T-cell (primary cell): ENCODE measurements at regions of chr3 and their contacts with region 1.

Region 1: DNA sequence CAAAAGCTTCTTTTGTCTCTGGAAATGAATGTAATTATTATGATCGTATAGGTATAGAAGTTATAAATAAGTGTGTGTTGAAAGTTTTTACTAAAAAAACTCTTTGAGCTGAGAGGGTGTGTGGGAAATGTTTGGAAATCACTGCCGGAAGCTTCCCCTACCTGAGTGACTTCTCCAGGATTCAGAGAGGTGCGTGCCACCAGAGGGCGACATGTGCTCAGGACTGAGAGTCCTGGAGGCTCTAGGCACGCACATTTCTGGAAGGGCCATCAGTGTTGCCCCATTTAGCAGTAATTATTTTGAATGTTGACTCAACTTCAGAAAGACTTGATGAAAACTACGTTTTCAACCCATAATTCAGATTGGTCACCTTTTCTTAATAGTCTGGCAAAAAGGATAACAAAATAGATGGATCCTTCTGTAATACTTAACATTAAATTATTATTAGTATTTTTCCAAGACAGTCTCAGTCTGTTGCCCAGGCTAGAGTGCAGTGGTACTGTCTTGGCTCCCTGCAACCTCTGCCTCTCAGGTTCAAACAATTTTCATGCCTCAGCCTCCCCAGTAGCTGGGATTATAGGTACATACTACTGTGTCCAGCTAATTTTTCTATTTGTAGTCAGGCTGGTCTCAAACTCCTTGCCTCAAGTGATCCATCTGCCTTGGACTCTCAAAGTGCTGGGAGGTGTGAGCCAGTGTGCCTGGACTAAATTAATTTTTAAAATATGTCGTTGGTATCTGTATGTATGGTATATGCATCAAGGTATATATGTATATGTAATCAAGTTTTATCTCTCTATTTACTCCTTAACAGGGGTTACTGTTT is 34.5 kb downstream of the GPR171 start:
- DNase-seq: peak; percentile 41 to 88 (median 75)
- ATAC-seq: peak; percentile 63 to 70 (median 68)
- H3K4me3 ChIP-seq: no peak overlapping the region
- H3K4me3 Mint-ChIP-seq: no peak overlapping the region
- H3K27ac ChIP-seq: no peak overlapping the region
- H3K27ac Mint-ChIP-seq: no peak overlapping the region
- H3K4me1 ChIP-seq: peaks cover 33% of the 10 kb centered on the region in 2 experiments
- H3K4me1 Mint-ChIP-seq: peaks cover 40 to 42% (median 40%) of the 10 kb centered on the region in 3 donors
- H3K27me3 ChIP-seq: no peaks in the 10 kb centered on the region
- H3K27me3 Mint-ChIP-seq: no peaks in the 10 kb centered on the region

Region 2: GRCh38 chr3:151203051-151203420 is 34.6 kb after region 1 on chr3 and contains the start of gene GPR171:
- CTCF ChIA-PET with region 1: interaction called, 11 to 16 read pairs
- POLR2A ChIA-PET with region 1: interaction called in 1 of 2 experiments, 3 read pairs
- DNase-seq: peak in 34 of 35 experiments; percentile 41 to 85 (median 64)
- ATAC-seq: peak; percentile 85 to 94 (median 88)
- H3K4me3 ChIP-seq: peak within 1 kb of the TSS; percentile 59 to 80
- H3K4me3 Mint-ChIP-seq: peak within 1 kb of the TSS; percentile 70 to 78 (median 70)
- H3K27ac ChIP-seq: peak within 1 kb of the TSS; percentile 89
- H3K27ac Mint-ChIP-seq: peak within 1 kb of the TSS; percentile 99
- H3K4me1 ChIP-seq: peaks cover 31 to 56% of the 10 kb centered on the region in 2 experiments
- H3K4me1 Mint-ChIP-seq: peaks cover 76 to 85% (median 77%) of the 10 kb centered on the region in 3 donors
- H3K27me3 ChIP-seq: no peaks in the 10 kb centered on the region
- H3K27me3 Mint-ChIP-seq: no peaks in the 10 kb centered on the region
- total RNA-seq, gene GPR171: 23.2 to 67.2 (median 51.9) TPM

Region 3: DNA sequence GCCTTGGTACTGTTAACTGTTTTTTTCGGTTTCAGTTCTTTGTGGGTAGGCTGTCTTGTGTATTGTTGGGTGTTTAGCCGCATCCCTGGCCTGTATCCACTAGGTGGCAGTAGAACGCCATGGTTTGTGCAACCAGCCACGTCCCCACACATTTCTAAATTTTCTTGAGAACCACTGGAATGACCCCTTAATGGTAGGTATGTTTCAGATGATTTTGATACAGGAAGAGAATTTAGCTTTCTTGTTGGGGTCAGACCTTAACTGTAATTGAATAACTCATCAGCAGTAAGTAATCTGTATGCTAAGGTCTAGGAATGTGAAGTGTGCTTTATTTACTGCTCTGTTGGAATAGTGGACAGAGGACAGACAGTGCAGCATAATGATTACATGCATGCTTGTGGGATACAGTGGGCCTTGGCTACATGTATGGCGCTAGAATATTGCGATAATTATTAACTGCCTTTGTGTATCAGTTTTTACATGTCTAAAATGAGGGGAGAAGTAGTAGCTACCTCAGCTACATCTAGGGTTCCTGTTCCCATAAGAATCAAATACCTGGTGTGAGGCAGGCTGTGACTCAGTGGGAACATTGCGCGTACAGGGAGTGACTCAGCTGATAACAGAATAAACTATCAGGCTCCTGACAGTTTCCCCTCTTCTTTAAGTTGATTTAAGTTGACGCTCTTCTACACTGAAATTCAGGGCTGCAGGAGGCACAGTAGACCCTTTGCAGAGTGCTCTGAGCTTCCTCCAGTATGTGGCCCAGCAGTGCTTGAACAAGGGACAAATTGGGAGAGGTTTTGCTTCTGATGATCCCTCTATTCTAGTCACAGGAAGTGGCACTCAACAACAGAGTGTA is 59.6 kb after region 1 on chr3:
- CTCF ChIA-PET with region 1: interaction called, 21 to 28 read pairs
- POLR2A ChIA-PET with region 1: no interaction called
- DNase-seq: peak; percentile 47 to 90 (median 69)
- ATAC-seq: peak; percentile 79 to 87 (median 84)
- H3K4me3 ChIP-seq: no peak overlapping the region
- H3K4me3 Mint-ChIP-seq: no peak overlapping the region
- H3K27ac ChIP-seq: no peak overlapping the region
- H3K27ac Mint-ChIP-seq: peak overlapping the region; percentile 62 to 68
- H3K4me1 ChIP-seq: peaks cover 19 to 48% of the 10 kb centered on the region in 2 experiments
- H3K4me1 Mint-ChIP-seq: peaks cover 53 to 58% (median 54%) of the 10 kb centered on the region in 3 donors
- H3K27me3 ChIP-seq: no peaks in the 10 kb centered on the region
- H3K27me3 Mint-ChIP-seq: no peaks in the 10 kb centered on the region

Region 4: DNA sequence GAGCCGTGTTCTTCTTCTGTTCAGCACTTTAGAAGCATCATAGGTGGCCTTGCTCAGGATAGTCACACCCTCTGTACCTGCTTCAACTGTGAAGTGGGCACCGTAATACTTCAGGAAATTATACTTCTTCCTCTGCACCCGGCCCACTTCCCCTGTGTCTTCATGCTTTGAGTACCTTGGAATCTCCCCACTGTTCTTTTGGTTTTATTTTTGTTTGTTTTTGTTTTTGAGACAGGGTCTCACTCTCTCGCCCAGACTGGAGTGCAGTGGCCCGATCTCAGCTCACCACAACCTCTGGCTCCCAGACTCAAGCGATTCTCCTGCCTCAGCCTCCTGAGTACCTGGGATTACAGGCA is 108.2 kb after region 1 on chr3:
- CTCF ChIA-PET with region 1: interaction called, 26 to 37 read pairs
- POLR2A ChIA-PET with region 1: no interaction called
- DNase-seq: peak in 33 of 35 experiments; percentile 4 to 67 (median 40)
- ATAC-seq: peak; percentile 72 to 97 (median 74)
- H3K4me3 ChIP-seq: no peak overlapping the region
- H3K4me3 Mint-ChIP-seq: peak overlapping the region; percentile 39 to 60 (median 58)
- H3K27ac ChIP-seq: peak overlapping the region; percentile 66
- H3K27ac Mint-ChIP-seq: peak overlapping the region; percentile 92 to 94
- H3K4me1 ChIP-seq: peaks cover 14 to 37% of the 10 kb centered on the region in 2 experiments
- H3K4me1 Mint-ChIP-seq: peaks cover 40 to 46% (median 46%) of the 10 kb centered on the region in 3 donors
- H3K27me3 ChIP-seq: no peaks in the 10 kb centered on the region
- H3K27me3 Mint-ChIP-seq: no peaks in the 10 kb centered on the region

Region 5: DNA sequence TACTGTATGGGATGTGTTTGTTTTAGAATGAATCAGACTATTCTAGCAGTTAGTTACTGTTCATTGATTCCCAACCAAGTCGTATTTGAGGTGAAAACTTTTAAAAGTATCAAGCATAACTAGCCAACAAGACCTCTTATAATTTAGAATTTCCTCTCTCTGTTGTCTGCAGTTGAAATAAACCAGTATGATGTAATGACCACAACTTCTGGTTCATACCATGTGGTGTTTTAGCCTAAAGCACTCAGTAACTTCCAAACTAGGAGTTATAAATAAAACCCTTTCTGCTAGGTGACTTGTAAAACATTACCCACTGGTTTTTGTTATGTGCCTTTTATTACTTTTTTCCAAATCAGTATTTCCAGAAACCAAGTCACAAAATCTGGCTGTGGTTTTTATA is 235.8 kb after region 1 on chr3:
- CTCF ChIA-PET with region 1: no interaction called
- POLR2A ChIA-PET with region 1: no interaction called
- DNase-seq: no peak
- ATAC-seq: no peak
- H3K4me3 ChIP-seq: no peak overlapping the region
- H3K4me3 Mint-ChIP-seq: no peak overlapping the region
- H3K27ac ChIP-seq: no peak overlapping the region
- H3K27ac Mint-ChIP-seq: no peak overlapping the region
- H3K4me1 ChIP-seq: no peaks in the 10 kb centered on the region
- H3K4me1 Mint-ChIP-seq: no peaks in the 10 kb centered on the region
- H3K27me3 ChIP-seq: peaks cover 0 to 2% of the 10 kb centered on the region in 2 experiments
- H3K27me3 Mint-ChIP-seq: peaks cover 0 to 16% of the 10 kb centered on the region in 2 donors